ENCODE measurements at regions of chr6 and their contacts with region 1.

Region 1: GRCh38 chr6:111129013-111129412 is 41.7 kb downstream of the SLC16A10 start:
- DNase-seq: peak; percentile 69 to 87
- ATAC-seq: peak; percentile 88 to 97
- H3K4me3 ChIP-seq: peak overlapping the region in 1 of 4 donors; percentile 13
- H3K27ac ChIP-seq: peak overlapping the region; percentile 88 to 98 (median 92)
- H3K4me1 ChIP-seq: peaks cover 71 to 92% of the 10 kb centered on the region in 2 donors
- H3K27me3 ChIP-seq: no peaks in the 10 kb centered on the region
- CTCF ChIP-seq: no peak
- POLR2A ChIP-seq: no peak

Region 2: DNA sequence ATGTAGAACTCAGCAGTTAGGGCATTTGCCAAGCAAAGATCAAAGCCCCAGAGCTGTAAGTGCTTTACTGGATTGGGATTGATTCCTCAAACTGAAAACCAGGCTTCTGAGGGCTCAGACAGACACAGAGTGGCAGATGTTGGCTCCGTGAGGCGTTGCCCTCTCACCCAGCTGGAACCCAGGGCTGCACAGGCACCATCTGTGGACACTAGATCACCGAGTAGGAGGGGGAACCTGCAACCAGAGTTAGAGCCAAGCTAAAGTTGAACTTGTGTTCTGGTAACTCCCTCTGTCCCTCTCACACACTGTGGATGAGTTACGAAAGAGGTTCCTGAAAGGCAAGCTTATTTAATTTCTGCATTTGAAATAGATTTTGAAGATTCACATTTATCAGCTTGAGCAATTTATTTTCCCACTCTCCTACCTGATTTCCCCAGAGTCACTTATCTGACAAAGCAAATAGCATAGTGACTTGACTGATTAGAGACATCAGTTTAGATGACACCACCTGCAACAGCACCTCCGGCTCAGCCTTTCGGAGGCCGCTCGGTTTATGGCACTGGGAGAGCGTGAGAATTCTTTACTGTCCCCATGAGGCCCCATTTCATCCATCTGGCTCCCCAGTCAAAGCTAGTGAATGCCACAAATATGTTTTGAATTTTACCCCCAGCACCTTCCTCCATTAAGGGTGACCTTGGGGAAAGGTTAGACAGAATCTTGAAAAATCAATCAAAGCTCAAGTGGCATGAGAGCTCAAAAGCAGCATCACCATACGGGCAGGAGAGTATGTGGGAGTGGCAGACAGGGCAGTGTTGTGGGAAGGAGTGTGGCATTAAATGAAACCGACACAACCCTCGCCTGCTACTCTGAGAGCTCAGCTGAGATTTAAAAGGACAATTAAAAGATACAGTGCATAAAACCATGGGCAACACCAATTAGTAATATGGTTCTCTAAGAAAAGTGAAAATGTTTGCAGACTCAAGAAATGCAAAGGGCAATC is 98.7 kb before region 1 on chr6:
- in situ Hi-C with region 1: no loop called
- intact Hi-C with region 1: loop called (anchors 5 kb)
- DNase-seq: peak; percentile 56 to 78
- ATAC-seq: peak; percentile 90 to 97
- H3K4me3 ChIP-seq: peak overlapping the region in 1 of 4 donors; percentile 14
- H3K27ac ChIP-seq: peak overlapping the region; percentile 39 to 81 (median 72)
- H3K4me1 ChIP-seq: peaks cover 39 to 52% of the 10 kb centered on the region in 2 donors
- H3K27me3 ChIP-seq: no peaks in the 10 kb centered on the region
- CTCF ChIP-seq: no peak
- POLR2A ChIP-seq: no peak

Region 3: DNA sequence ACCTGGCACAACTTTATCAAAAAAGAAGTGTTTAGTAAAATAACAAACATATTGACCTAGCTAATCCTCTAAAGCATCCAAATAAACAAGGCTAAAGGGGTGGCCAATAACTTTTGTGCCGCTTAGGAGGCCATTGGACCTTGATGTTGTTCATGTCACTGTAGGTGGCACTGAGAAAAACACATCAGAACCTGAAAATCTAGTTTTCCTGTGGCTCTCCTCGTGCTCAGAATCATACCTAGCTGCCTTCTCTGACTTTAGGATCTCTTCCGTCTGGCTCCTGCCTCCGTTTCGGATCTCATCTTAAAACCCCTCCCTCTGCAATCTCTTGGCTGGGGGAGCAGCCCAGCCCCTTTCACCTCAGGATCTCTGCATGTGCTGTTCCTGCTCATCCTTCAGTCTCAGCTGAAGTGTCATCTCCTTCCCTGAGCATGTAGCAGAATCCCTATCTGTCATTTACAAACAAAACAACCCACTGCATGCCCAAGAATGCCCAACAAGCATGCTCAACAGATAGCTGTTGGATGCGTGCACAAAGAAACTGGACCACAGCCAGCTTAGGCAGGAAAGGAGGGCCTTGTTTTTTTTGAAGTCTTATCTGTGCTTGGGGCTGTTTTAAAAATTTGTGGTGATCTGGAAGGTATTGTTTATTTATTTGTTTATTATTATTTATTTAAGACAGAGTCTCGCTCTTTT is 60.4 kb before region 1 on chr6:
- in situ Hi-C with region 1: no loop called
- intact Hi-C with region 1: no loop called
- DNase-seq: no peak
- ATAC-seq: no peak
- H3K4me3 ChIP-seq: no peak overlapping the region
- H3K27ac ChIP-seq: peak overlapping the region in 2 of 4 donors; percentile 75 to 77
- H3K4me1 ChIP-seq: peaks cover 26 to 29% of the 10 kb centered on the region in 2 donors
- H3K27me3 ChIP-seq: no peaks in the 10 kb centered on the region
- CTCF ChIP-seq: no peak
- POLR2A ChIP-seq: no peak

Region 4: GRCh38 chr6:111096246-111096645 is 32.8 kb before region 1 on chr6:
- in situ Hi-C with region 1: no loop called
- intact Hi-C with region 1: loop called (anchors 2 kb)
- DNase-seq: no peak
- ATAC-seq: no peak
- H3K4me3 ChIP-seq: no peak overlapping the region
- H3K27ac ChIP-seq: peak overlapping the region; percentile 45 to 88 (median 67)
- H3K4me1 ChIP-seq: peaks cover 65% of the 10 kb centered on the region in 2 donors
- H3K27me3 ChIP-seq: no peaks in the 10 kb centered on the region
- CTCF ChIP-seq: no peak
- POLR2A ChIP-seq: no peak

Region 5: GRCh38 chr6:111291336-111292259 is 162.6 kb after region 1 on chr6:
- in situ Hi-C with region 1: no loop called
- intact Hi-C with region 1: no loop called
- DNase-seq: no peak
- ATAC-seq: peak; percentile 48 to 51
- H3K4me3 ChIP-seq: no peak overlapping the region
- H3K27ac ChIP-seq: peak overlapping the region in 1 of 4 donors; percentile 16
- H3K4me1 ChIP-seq: peaks cover 12 to 16% of the 10 kb centered on the region in 2 donors
- H3K27me3 ChIP-seq: no peaks in the 10 kb centered on the region
- CTCF ChIP-seq: no peak
- POLR2A ChIP-seq: no peak